ENCODE measurements at regions of chr2 and their contacts with region 1.

Region 1: DNA sequence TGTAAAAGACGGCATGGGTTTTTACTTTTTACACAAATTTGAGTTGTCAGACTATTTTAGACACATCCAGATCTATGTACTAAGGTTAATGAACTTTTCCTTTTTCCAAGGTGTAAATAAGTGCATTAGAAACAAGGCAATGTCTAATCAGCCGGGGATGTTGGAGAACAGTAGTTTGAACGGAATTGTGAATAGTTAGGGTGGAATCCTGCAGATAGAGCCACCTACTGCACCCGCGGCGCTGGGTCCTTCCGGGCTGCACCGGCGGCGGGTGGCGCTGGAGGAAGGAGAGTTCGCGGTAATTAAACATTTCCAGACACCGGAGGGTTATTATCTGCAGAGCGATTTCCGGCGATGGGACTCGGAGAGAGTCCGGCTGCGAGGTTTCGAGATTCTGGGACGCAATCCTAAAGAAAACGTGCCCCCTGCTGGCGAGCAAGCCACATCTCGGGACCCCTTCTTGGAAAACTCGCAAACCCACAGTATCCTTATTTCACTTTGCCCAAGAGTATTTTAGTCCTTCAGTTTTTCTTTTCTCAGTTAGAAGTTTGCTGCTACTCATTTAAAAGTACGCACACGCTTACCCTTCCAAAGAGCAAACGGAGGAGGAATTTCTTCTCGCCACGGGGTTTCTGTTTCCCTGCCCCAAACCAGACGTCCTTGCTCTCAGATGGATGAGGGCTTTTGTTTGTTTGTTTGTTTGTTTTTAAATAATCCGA is 4.5 kb upstream of the OSR1 start:
- DNase-seq: peak; percentile 74
- ATAC-seq: peak; percentile 59
- H3K4me3 Mint-ChIP-seq: peak overlapping the region; percentile 88
- H3K27ac Mint-ChIP-seq: peak overlapping the region; percentile 65
- H3K4me1 Mint-ChIP-seq: peaks cover 30% of the 10 kb centered on the region
- H3K27me3 Mint-ChIP-seq: peaks cover 57% of the 10 kb centered on the region

Region 2: DNA sequence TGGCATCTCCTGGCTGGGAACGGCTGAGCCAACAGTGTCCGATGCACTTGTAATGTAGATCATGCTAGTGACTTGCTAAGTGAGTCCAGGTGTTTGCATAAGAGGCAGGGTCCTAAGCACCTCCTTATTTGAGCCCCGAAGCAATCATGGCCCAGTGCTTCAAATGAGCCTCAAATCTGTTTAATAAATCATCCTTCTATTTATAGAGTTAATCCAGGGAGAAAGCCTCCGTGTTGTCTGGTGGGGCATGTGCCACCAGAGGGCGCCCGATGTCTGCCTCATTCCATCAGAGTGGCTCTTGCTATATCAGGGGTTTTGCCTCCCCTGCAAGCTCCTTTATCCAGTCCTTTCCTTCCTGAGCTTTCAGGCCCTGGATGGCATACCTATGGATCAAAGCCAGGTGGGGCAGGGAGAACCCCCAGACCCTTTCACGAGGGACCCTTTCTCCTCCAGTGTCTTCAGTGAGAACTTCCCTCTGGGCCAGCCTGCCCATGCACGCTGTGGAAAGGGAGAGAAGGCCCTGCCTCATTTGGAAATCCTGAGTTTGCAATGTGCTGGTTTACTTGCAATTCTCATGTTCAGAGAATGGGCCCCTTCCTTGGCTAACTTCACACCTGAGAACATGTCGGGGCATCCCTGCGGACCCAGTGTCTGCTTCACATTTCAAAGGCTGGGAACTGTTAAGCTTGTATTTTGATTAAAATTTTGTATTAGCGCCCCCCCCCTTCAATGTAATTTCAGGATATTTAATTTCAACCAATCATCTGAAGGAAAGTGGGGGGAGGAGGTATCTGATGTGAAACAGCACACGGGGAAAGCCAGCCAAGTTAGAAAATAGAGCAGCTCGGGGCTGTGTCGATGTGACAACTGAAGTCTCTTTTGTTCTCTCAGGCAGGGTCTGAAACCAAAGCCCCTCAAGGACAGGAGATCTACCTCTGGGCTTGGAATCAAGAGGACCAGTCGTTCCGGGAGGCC is 842.2 kb before region 1 on chr2:
- CTCF ChIA-PET with region 1: interaction called, 3 read pairs
- POLR2A ChIA-PET with region 1: no interaction called
- intact Hi-C with region 1: loop called (anchors 1 to 2 kb)
- DNase-seq: peak; percentile 85
- ATAC-seq: peak; percentile 75
- H3K4me3 Mint-ChIP-seq: no peak overlapping the region
- H3K27ac Mint-ChIP-seq: no peak overlapping the region
- H3K4me1 Mint-ChIP-seq: no peaks in the 10 kb centered on the region
- H3K27me3 Mint-ChIP-seq: peaks cover 11% of the 10 kb centered on the region

Region 3: DNA sequence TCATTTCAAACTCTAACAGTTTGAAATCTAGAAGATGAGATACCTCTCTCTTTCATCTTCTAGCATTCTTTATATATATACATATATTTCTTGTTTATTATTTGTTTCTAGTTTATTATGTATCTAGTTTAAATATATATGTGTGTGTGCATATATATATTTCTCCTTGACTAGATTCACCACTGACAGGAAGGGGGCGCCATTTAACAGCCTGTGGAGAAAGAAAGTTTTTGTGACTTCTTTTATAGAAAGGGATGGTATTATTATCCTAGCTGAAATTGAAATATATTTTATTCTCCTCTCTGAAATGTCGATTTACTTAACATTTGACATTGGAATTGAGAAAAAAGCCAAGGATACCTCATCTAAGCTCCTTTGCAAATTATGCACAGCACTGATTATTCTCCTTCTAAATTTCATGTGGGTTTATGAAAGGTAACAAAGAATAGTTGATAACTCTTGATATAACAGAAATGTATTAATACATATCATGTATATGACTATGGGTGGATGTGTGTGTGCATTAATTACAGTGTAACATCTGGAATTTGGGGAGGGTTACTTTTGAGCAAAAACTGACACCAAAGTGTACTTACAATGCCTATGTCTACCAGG is 612.9 kb before region 1 on chr2:
- CTCF ChIA-PET with region 1: interaction called, 3 read pairs
- POLR2A ChIA-PET with region 1: no interaction called
- intact Hi-C with region 1: loop called (anchors 1 to 5 kb)
- DNase-seq: peak; percentile 67
- ATAC-seq: no peak
- H3K4me3 Mint-ChIP-seq: no peak overlapping the region
- H3K27ac Mint-ChIP-seq: no peak overlapping the region
- H3K4me1 Mint-ChIP-seq: no peaks in the 10 kb centered on the region
- H3K27me3 Mint-ChIP-seq: no peaks in the 10 kb centered on the region

Region 4: DNA sequence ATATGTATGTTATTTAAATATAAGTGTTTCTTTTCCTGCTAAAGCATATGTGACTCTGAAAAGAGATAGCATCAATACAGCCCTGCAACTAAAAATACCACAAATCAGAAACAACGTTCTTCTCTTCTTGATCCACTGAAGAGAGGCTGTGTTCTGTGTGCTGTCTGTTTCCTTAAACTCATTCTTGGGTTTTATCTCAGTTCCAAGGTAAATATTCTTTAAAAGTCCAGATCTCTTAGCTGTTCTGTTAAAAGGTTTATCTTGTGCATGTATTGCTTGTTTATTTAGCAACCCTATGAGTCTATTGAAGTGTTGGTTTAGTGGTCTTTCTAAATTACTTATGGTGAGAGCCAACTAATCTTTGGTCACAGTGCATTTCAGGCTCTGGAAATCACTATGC is 600.2 kb before region 1 on chr2:
- CTCF ChIA-PET with region 1: no interaction called
- POLR2A ChIA-PET with region 1: no interaction called
- intact Hi-C with region 1: no loop called
- DNase-seq: no peak
- ATAC-seq: no peak
- H3K4me3 Mint-ChIP-seq: no peak overlapping the region
- H3K27ac Mint-ChIP-seq: no peak overlapping the region
- H3K4me1 Mint-ChIP-seq: no peaks in the 10 kb centered on the region
- H3K27me3 Mint-ChIP-seq: no peaks in the 10 kb centered on the region